Calu3 (cell line): ENCODE measurements at regions of chr5 and their contacts with region 1.

Region 1: DNA sequence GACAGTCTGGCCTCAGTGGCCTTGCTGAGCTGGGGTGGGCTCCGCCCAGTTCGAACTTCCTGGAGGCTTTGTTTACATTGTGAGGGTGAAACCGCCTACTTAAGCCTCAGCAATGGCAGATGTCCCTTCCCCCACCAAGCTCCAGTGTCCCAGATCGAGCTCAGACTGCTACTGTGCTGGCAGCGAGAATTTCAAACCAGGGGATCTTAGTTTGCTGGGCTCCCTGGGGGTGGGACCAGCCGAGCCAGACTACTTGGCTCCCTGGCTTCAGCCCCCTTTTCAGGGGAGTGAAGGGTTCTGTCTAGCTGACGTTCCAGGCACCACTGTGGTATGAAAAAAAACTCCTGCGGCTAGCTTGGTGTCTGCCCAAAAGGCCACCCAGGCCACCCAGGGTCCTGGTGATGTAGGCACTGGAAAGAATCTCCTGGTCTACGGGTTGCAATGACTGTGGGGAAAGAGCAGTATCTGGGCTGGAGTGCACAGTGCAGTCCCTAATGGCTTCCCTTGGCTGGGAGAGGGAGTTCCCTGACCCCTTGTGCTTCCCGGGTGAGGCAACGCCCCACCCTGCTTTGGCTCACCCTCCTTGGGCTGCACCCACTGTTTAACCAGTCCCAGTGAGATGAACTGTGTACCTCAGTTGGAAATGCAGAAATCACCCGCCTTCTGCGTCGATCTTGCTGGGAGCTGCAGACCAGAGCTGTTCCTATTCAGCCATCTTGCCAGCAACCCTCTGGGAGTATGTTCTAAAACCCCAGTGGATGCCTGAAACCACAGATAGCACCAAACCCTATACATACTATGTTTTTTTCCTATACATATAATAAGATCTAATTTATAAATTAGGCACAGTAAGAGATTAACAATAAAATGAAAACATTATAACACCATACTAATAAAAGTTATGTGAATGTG is 95.5 kb downstream of the TMEM161B start:
- DNase-seq: peak; percentile 45
- H3K4me3 Mint-ChIP-seq: no peak overlapping the region
- H3K27ac Mint-ChIP-seq: no peak overlapping the region
- H3K4me1 Mint-ChIP-seq: peaks cover 15% of the 10 kb centered on the region
- H3K27me3 Mint-ChIP-seq: no peaks in the 10 kb centered on the region
- CTCF ChIP-seq: no peak

Region 2: GRCh38 chr5:88130211-88130815 is 42.8 kb before region 1 on chr5:
- CTCF ChIA-PET with region 1: no interaction called
- intact Hi-C with region 1: loop called (anchors 1 kb)
- DNase-seq: no peak
- H3K4me3 Mint-ChIP-seq: no peak overlapping the region
- H3K27ac Mint-ChIP-seq: no peak overlapping the region
- H3K4me1 Mint-ChIP-seq: no peaks in the 10 kb centered on the region
- H3K27me3 Mint-ChIP-seq: no peaks in the 10 kb centered on the region
- CTCF ChIP-seq: no peak